Caco-2 (cell line): ENCODE measurements at regions of chrX and their contacts with region 1.

Region 1: DNA sequence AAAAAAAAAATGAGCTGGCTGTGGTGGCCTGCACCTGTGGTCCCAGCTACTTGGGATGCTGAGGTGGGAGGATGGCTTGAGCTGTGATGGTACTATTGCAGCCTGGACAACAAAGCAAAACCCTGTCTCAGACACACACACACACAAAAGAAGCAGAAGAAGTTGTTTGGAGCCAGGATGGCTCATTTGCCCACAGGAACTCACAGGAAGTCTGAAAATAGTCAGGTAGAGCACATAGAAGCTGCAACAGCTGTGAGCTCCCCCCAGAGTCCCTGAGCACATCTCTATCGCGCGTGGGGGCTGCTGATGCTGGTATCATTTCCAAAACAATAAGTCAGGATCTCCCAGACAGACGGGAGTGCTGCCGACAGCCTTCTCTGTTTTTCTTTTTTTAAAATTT is 13.4 kb upstream of the DHRSX start:
- DNase-seq: no peak
- H3K4me3 ChIP-seq: no peak overlapping the region
- H3K4me3 Mint-ChIP-seq: no peak overlapping the region
- H3K27ac Mint-ChIP-seq: peak overlapping the region; percentile 88
- H3K4me1 ChIP-seq: peaks cover 41% of the 10 kb centered on the region
- H3K4me1 Mint-ChIP-seq: peaks cover 22% of the 10 kb centered on the region
- H3K27me3 ChIP-seq: no peaks in the 10 kb centered on the region
- H3K27me3 Mint-ChIP-seq: no peaks in the 10 kb centered on the region
- CTCF ChIP-seq: no peak

Region 2: DNA sequence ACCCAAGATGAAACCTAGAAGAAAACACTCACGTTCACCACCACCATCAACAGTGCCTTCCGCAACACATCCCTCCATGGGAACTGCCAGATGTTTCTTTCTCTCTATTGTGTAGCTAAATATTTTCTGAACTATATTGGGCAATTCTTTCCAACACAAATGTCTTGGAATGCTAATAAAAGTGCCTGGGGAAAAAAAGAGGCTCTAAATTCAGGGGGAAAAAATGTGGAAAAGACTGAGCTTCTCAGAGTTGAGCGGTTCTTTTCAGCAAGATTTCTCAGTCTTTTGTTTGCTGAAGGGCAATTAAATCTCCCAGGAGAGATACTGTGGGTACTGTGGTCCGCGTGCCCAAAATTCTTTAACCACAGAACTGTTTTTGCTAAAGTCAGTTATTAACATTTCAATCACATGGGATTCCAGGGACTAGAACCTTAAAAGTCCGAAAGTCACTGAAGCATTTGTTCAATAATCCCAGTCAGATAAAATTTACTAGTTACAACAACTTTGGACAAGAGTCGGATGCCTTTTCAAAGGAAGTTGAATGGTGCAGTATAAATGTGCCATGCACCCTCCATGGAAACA is 38.6 kb after region 1 on chrX:
- CTCF ChIA-PET with region 1: no interaction called
- POLR2A ChIA-PET with region 1: no interaction called
- intact Hi-C with region 1: loop called (anchors 1 kb)
- DNase-seq: peak; percentile 71 to 72
- H3K4me3 ChIP-seq: no peak overlapping the region
- H3K4me3 Mint-ChIP-seq: peak overlapping the region; percentile 40
- H3K27ac Mint-ChIP-seq: peak overlapping the region; percentile 65
- H3K4me1 ChIP-seq: peaks cover 24% of the 10 kb centered on the region
- H3K4me1 Mint-ChIP-seq: peaks cover 14% of the 10 kb centered on the region
- H3K27me3 ChIP-seq: no peaks in the 10 kb centered on the region
- H3K27me3 Mint-ChIP-seq: no peaks in the 10 kb centered on the region
- CTCF ChIP-seq: no peak

Region 3: GRCh38 chrX:2589186-2590030 is 75.3 kb after region 1 on chrX:
- CTCF ChIA-PET with region 1: no interaction called
- POLR2A ChIA-PET with region 1: no interaction called
- intact Hi-C with region 1: loop called (anchors 5 kb)
- DNase-seq: no peak
- H3K4me3 ChIP-seq: no peak overlapping the region
- H3K4me3 Mint-ChIP-seq: no peak overlapping the region
- H3K27ac Mint-ChIP-seq: no peak overlapping the region
- H3K4me1 ChIP-seq: peaks cover 17% of the 10 kb centered on the region
- H3K4me1 Mint-ChIP-seq: peaks cover 11% of the 10 kb centered on the region
- H3K27me3 ChIP-seq: no peaks in the 10 kb centered on the region
- H3K27me3 Mint-ChIP-seq: no peaks in the 10 kb centered on the region
- CTCF ChIP-seq: no peak